ENCODE measurements at regions of chr19 and their contacts with region 1.

Region 1: DNA sequence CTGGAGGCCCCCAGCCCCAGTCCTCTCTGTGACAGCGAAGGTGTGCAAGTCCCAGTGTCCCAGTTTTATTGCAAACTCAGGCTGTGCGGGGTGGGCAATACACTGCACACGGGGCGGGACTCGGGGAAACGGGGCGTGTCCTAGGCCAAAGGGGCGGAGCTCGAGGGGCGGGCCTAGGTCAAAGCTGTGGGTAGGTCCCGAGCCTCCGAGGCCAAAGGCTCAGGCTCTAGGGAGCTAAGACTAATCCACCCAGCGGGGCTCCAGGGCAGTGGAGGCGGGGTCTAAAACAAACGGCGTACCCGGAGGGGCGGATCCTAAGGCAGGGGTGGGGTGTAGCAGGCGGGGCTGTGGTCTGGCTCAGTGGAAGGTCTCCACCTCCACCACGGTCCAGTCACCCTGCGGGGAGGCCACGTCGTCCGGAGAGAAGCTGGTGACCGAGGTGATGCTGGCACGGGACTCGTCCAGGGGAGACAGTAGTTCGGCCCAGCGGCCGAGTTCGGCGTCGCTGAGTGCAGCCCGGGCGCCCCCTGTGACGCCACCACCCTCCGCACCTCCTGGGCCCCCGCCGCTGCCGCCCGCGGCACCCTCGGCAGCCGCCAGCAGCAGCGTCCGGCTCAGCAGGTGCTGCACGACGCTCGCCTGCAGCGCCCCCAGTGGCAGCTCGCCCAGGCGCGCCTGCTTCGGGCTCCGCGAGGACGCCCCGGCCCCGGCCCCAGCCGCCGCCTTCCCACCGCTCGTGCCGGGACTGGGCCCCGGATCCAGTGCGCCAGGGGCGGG is 5.3 kb downstream of the PRR36 start:
- DNase-seq: peak; percentile 92 to 94
- H3K4me3 ChIP-seq: peak overlapping the region; percentile 77
- H3K4me3 Mint-ChIP-seq: peak overlapping the region; percentile 87
- H3K27ac Mint-ChIP-seq: peak overlapping the region; percentile 89
- H3K4me1 ChIP-seq: peaks cover 7% of the 10 kb centered on the region
- H3K4me1 Mint-ChIP-seq: peaks cover 9% of the 10 kb centered on the region
- H3K27me3 ChIP-seq: no peaks in the 10 kb centered on the region; the same call in 1 of the 2 replicates
- H3K27me3 Mint-ChIP-seq: no peaks in the 10 kb centered on the region
- CTCF ChIP-seq: peak; percentile 53 to 71

Region 2: DNA sequence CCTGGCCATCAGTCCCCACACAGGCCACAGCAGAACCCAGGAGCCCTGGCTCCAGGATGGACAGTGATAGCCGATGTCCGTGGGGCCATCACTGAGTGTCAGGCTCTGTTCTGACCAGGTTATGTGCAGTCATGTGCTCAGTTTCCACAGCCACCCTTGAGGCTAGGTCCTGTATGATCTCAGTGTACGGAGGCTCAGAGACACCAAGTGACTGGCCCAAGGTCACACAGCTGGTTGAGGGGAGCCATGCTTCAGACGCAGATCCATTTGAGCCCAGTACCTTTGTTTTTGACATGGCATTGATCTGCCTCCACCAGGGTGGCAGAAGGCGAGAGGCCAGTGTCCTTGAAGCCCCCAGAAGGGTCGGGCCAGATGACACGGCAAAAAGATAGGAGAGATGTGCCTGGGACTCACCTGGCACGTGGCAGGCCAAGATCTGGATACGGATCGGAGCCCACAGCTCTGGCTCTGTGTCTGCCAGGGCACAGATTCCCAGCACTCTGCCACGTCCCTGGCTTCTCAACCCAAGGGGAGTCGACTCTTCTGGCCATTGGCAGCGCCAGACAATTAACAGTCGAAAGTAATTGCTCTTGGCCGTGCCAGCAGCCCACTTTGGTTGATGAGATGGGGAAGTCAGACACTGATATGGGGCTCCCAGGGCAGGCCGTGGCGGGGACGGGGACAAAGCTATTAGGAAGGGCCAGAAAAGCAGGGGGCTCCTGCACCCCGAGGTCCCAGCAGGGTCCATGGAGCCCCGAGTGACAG is 23.3 kb before region 1 on chr19:
- CTCF ChIA-PET with region 1: no interaction called
- POLR2A ChIA-PET with region 1: no interaction called
- intact Hi-C with region 1: no loop called
- DNase-seq: no peak
- H3K4me3 ChIP-seq: no peak overlapping the region
- H3K4me3 Mint-ChIP-seq: no peak overlapping the region
- H3K27ac Mint-ChIP-seq: no peak overlapping the region
- H3K4me1 ChIP-seq: no peaks in the 10 kb centered on the region
- H3K4me1 Mint-ChIP-seq: no peaks in the 10 kb centered on the region
- H3K27me3 ChIP-seq: no peaks in the 10 kb centered on the region
- H3K27me3 Mint-ChIP-seq: no peaks in the 10 kb centered on the region
- CTCF ChIP-seq: no peak

Region 3: GRCh38 chr19:7858109-7858830 is 10.6 kb before region 1 on chr19:
- CTCF ChIA-PET with region 1: interaction called, 33 read pairs
- POLR2A ChIA-PET with region 1: no interaction called
- intact Hi-C with region 1: no loop called
- DNase-seq: no peak
- H3K4me3 ChIP-seq: no peak overlapping the region
- H3K4me3 Mint-ChIP-seq: no peak overlapping the region
- H3K27ac Mint-ChIP-seq: no peak overlapping the region
- H3K4me1 ChIP-seq: peaks cover 6% of the 10 kb centered on the region
- H3K4me1 Mint-ChIP-seq: peaks cover 5% of the 10 kb centered on the region
- H3K27me3 ChIP-seq: no peaks in the 10 kb centered on the region
- H3K27me3 Mint-ChIP-seq: no peaks in the 10 kb centered on the region
- CTCF ChIP-seq: no peak

Region 4: DNA sequence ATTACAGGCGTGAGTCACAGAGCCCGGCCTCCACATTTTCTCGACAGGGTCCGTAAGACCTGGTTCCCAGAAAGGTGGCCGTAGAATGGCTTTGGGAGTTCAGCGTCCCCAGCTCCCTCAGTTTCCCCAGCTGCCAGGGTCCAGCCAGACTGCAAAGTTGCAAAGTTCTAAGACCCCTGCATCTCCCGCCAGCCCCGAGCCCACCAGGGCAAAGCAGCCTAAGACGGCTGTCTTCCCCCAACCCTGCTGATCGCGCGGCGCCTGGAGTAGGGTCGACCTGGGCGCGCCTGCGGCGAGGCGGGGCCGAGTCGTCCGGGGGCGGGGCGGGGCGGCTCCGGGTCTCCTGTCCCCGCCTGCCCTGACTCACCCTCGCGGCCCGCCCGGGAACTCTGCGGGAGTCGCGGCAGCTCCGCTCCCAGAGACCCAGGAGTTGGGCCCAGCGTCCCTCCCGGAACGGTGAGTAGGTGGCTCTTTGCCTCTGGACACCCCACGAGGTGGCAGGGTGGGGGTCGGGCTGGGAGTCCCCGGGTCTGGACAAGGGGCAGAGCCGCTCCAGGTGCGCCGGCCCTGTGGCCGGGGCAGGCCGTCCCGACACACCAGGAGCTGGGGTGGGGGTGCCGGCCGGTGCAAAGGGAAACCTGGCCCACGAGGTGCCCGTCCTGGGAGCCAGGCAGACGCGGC is 19.4 kb after region 1 on chr19 and contains the start of gene LRRC8E:
- CTCF ChIA-PET with region 1: interaction called, 8 read pairs
- POLR2A ChIA-PET with region 1: interaction called, 12 read pairs
- intact Hi-C with region 1: no loop called
- DNase-seq: peak; percentile 78 to 85
- H3K4me3 ChIP-seq: peak within 1 kb of the TSS; percentile 66
- H3K4me3 Mint-ChIP-seq: peak within 1 kb of the TSS; percentile 70
- H3K27ac Mint-ChIP-seq: peak within 1 kb of the TSS; percentile 19
- H3K4me1 ChIP-seq: peaks cover 10% of the 10 kb centered on the region; the same call in 1 of the 2 replicates
- H3K4me1 Mint-ChIP-seq: no peaks in the 10 kb centered on the region
- H3K27me3 ChIP-seq: no peaks in the 10 kb centered on the region
- H3K27me3 Mint-ChIP-seq: no peaks in the 10 kb centered on the region
- CTCF ChIP-seq: peak in 1 of 2 experiments; percentile 10
- total RNA-seq, gene LRRC8E: 6.5 and 6.7 TPM in 2 replicates

Region 5: DNA sequence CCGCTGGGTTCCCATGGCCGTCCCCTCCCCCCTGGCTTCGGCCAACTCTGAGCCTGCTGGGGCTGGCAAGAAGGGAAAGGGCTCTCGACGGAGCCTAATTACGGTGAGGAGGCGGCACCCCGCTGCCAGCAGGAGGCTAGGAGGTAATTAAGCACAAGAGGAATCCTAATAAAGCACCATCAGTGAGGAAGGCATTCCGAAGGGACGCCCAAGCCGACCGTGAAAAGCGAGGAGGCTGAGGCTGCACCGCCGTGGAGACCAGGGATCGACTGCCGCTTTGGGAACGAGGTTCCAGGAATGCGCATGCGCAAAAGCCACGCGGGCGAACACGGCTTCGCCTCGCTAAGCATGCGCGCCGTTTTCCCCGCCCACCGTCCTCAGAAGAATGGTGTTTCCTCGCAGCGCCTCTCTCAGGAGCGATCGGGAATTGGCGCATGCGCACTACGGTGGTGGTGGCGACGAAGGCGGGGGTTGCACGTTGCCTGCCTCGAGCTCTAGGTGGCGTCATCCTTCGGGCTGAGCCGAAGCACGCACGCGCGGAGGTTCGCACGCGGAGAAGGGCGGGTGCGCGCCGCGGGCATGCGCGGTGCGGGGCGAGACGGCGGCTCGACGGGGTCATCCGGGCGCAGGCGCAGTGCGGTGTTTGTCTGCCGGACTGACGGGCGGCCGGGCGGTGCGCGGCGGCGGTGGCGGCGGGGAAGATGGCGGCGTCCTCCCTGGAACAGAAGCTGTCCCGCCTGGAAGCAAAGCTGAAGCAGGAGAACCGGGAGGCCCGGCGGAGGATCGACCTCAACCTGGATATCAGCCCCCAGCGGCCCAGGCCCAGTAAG is 34.6 kb after region 1 on chr19 and contains the start of gene MAP2K7:
- CTCF ChIA-PET with region 1: interaction called, 21 read pairs
- POLR2A ChIA-PET with region 1: interaction called, 20 read pairs
- intact Hi-C with region 1: loop called (anchors 2 kb)
- DNase-seq: peak; percentile 99
- H3K4me3 ChIP-seq: peak within 1 kb of the TSS; percentile 91
- H3K4me3 Mint-ChIP-seq: peak within 1 kb of the TSS; percentile 92
- H3K27ac Mint-ChIP-seq: peak within 1 kb of the TSS; percentile 89
- H3K4me1 ChIP-seq: peaks cover 12% of the 10 kb centered on the region; the same call in 1 of the 2 replicates
- H3K4me1 Mint-ChIP-seq: peaks cover 6% of the 10 kb centered on the region
- H3K27me3 ChIP-seq: no peaks in the 10 kb centered on the region
- H3K27me3 Mint-ChIP-seq: no peaks in the 10 kb centered on the region
- CTCF ChIP-seq: peak; percentile 41 to 71
- total RNA-seq, gene MAP2K7: 37.4 and 42.6 TPM in 2 replicates

Region 6: DNA sequence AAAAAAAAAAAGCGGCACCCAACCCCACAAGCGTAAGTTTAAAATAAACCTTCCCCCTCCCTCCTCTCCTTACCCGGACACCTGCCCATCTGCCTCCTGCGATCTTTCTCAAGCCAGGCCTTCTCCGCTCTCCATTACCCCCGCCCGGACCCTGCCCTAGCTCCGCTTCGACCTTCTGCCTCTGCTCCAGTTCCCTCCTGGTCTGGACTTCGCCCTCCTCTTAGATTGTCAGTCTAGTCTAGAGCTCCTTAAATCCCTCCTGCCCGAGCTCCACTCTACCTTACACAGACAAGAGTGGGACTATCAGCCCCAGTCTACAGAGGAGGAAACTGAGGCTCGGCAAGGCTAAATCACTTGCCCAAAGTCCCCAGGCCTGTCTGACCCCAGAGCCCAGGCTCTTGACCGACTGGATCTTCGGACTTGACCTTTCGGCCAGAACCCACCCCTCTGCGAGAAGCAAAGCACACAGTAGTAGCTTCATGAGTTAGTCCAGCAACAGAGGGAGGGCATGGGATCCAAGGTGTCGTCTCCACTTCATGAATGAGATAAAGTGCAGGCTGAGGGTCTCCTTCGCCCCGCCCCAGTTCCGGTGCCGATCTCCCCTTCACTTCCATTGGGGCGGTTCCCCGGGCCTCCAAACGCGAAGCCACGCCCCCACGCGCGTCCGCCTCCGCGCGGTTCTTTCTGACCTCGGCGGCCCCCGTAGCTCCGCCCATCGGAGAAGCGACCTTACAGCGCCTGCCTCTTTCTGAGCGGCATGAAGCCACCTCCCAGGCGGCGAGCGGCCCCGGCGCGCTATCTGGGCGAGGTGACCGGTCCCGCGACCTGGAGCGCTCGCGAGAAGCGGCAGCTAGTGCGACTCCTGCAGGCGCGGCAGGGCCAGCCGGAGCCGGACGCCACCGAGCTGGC is 51.0 kb after region 1 on chr19 and contains the start of gene SNAPC2:
- CTCF ChIA-PET with region 1: interaction called, 50 read pairs
- POLR2A ChIA-PET with region 1: interaction called, 18 read pairs
- intact Hi-C with region 1: loop called (anchors 1 kb)
- DNase-seq: peak; percentile 96
- H3K4me3 ChIP-seq: peak within 1 kb of the TSS; percentile 63
- H3K4me3 Mint-ChIP-seq: peak within 1 kb of the TSS; percentile 87
- H3K27ac Mint-ChIP-seq: peak within 1 kb of the TSS; percentile 83
- H3K4me1 ChIP-seq: peaks cover 16% of the 10 kb centered on the region
- H3K4me1 Mint-ChIP-seq: peaks cover 7% of the 10 kb centered on the region
- H3K27me3 ChIP-seq: no peaks in the 10 kb centered on the region
- H3K27me3 Mint-ChIP-seq: no peaks in the 10 kb centered on the region
- CTCF ChIP-seq: no peak
- total RNA-seq, gene SNAPC2: 8.8 and 10.4 TPM in 2 replicates

Region 7: GRCh38 chr19:8085598-8086408 is 216.9 kb after region 1 on chr19:
- CTCF ChIA-PET with region 1: no interaction called
- POLR2A ChIA-PET with region 1: no interaction called
- intact Hi-C with region 1: no loop called
- DNase-seq: peak; percentile 60 to 83
- H3K4me3 ChIP-seq: no peak overlapping the region
- H3K4me3 Mint-ChIP-seq: no peak overlapping the region
- H3K27ac Mint-ChIP-seq: peak overlapping the region; percentile 14
- H3K4me1 ChIP-seq: peaks cover 21% of the 10 kb centered on the region
- H3K4me1 Mint-ChIP-seq: peaks cover 14% of the 10 kb centered on the region
- H3K27me3 ChIP-seq: no peaks in the 10 kb centered on the region
- H3K27me3 Mint-ChIP-seq: no peaks in the 10 kb centered on the region
- CTCF ChIP-seq: no peak

Measured in Caco-2 (cell line).